SK-N-SH (cell line): ENCODE measurements at regions of chr11 and their contacts with region 1.

Region 1: DNA sequence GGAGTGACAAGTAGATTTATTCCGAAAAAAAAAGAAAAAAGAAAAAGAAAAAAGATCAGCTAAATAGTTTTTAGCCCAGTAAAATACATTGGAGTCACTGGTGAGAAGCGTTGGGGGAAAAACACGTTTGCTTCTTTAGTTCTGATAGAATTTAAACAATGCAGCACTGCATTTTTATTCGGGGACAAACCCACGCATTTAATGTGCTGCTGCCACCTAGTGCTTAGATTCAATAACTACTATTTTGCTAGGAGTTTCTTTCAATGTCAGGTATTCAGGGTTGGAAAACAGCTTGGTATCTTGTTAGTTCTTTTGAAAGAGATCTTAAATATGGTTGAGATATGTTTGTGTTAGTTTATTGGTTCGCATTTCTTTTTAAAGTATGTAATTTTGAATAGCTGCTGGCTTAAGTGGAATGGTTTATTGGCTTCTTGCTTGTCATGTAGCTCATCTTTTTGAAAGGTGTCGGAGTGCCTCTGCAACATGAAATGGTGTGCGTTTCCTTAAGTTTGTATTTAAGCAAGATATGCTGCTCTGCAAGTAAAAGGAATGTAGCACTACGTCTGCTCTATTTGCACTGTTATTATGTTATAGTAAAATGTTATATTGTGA is 41.9 kb downstream of the SVIP start:
- DNase-seq: peak; percentile 46
- H3K4me3 ChIP-seq: no peak overlapping the region
- H3K27ac ChIP-seq: no peak overlapping the region
- H3K4me1 ChIP-seq: peaks cover 0 to 15% of the 10 kb centered on the region in 2 experiments; a peak in 2 of 4 replicates
- H3K27me3 ChIP-seq: no peaks in the 10 kb centered on the region
- CTCF ChIP-seq: peak; percentile 83
- EP300 ChIP-seq: no peak
- RAD21 ChIP-seq: peak; percentile 86

Region 2: DNA sequence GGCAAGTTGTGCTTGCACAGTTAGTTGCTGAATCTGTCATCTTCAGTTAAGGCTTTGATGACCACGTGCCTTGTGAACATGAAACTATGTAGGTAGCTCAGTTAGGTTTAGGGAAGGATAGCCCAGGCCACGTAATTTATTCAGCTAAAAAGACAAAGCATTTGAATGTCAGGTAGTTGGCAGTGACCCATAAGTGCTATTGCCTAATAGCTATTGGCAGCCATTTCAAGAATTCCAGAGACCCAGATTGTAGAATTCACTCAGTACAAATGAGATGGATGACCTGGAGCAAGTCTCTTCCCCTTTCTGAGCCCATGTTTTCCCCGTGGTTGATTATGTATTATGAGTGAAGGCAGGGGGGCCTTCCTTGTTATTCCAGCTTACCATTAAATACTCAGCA is 860.0 kb before region 1 on chr11:
- CTCF ChIA-PET with region 1: no interaction called
- POLR2A ChIA-PET with region 1: no interaction called
- DNase-seq: no peak
- H3K4me3 ChIP-seq: no peak overlapping the region
- H3K27ac ChIP-seq: no peak overlapping the region
- H3K4me1 ChIP-seq: peaks cover 0 to 8% of the 10 kb centered on the region in 2 experiments; a peak in 2 of 4 replicates
- H3K27me3 ChIP-seq: no peaks in the 10 kb centered on the region
- CTCF ChIP-seq: no peak
- EP300 ChIP-seq: no peak
- RAD21 ChIP-seq: no peak

Region 3: DNA sequence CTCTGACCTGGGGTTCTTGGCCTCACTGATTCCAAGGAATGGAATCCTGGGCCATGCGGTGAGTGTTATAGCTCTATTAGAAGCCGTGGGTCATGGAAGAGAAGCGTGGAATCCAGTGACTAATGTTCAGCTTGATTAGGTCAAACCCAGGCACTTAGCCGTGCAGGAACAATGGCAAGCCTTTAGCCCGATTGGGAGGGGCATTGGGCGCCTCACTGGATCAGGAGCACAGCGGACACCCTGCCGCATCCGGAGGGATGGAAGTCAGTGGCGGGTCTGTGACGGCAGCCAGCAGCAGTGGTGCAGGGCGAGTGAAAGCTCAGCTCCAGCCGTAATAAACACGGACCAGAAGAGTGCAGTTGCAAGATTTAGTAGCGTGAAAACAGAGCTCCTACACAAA is 470.0 kb before region 1 on chr11:
- CTCF ChIA-PET with region 1: interaction called, 13 read pairs
- POLR2A ChIA-PET with region 1: no interaction called
- DNase-seq: no peak
- H3K4me3 ChIP-seq: no peak overlapping the region
- H3K27ac ChIP-seq: no peak overlapping the region
- H3K4me1 ChIP-seq: no peaks in the 10 kb centered on the region
- H3K27me3 ChIP-seq: no peaks in the 10 kb centered on the region
- CTCF ChIP-seq: no peak
- EP300 ChIP-seq: no peak
- RAD21 ChIP-seq: no peak

Region 4: GRCh38 chr11:22337596-22338485 is 449.8 kb before region 1 on chr11 and contains the start of gene SLC17A6:
- CTCF ChIA-PET with region 1: interaction called, 20 read pairs
- POLR2A ChIA-PET with region 1: no interaction called
- DNase-seq: no peak
- H3K4me3 ChIP-seq: no peak within 1 kb of the TSS
- H3K27ac ChIP-seq: no peak within 1 kb of the TSS
- H3K4me1 ChIP-seq: no peaks in the 10 kb centered on the region
- H3K27me3 ChIP-seq: no peaks in the 10 kb centered on the region
- CTCF ChIP-seq: no peak
- EP300 ChIP-seq: no peak
- RAD21 ChIP-seq: no peak
- polyA plus RNA-seq, gene SLC17A6: not detected in 2 replicates

Region 5: GRCh38 chr11:22666688-22667439 is 120.8 kb before region 1 on chr11:
- CTCF ChIA-PET with region 1: interaction called, 25 read pairs
- POLR2A ChIA-PET with region 1: no interaction called
- DNase-seq: peak; percentile 85
- H3K4me3 ChIP-seq: peak overlapping the region; percentile 52 to 53; a peak in 3 of 4 replicates
- H3K27ac ChIP-seq: peak overlapping the region in 1 of 2 experiments; percentile 28; a peak in 1 of 4 replicates
- H3K4me1 ChIP-seq: peaks cover 0 to 8% of the 10 kb centered on the region in 2 experiments; a peak in 1 of 4 replicates
- H3K27me3 ChIP-seq: peaks cover 17% of the 10 kb centered on the region; the same call in 1 of the 2 replicates
- CTCF ChIP-seq: peak; percentile 11; the same call in 1 of the 2 replicates
- EP300 ChIP-seq: no peak
- RAD21 ChIP-seq: no peak